ENCODE measurements at regions of chr6 and their contacts with region 1.

Region 1: GRCh38 chr6:87808005-87808757 is 106.1 kb upstream of the AKIRIN2 start:
- DNase-seq: no peak
- ATAC-seq: peak; percentile 45
- H3K4me3 ChIP-seq: no peak overlapping the region
- H3K27ac ChIP-seq: peak overlapping the region; percentile 43
- H3K4me1 ChIP-seq: peaks cover 27% of the 10 kb centered on the region
- H3K27me3 ChIP-seq: no peaks in the 10 kb centered on the region
- CTCF ChIP-seq: no peak
- EP300 ChIP-seq: no peak
- POLR2A ChIP-seq: no peak
- RAD21 ChIP-seq: no peak

Region 2: GRCh38 chr6:87723170-87724078 is 84.8 kb before region 1 on chr6:
- CTCF ChIA-PET with region 1: no interaction called
- POLR2A ChIA-PET with region 1: interaction called, 3 read pairs
- RAD21 ChIA-PET with region 1: interaction called, 5 read pairs
- SMC1A ChIA-PET with region 1: interaction called, 14 read pairs
- in situ Hi-C with region 1: no loop called
- intact Hi-C with region 1: no loop called
- DNase-seq: peak; percentile 77
- ATAC-seq: peak; percentile 77
- H3K4me3 ChIP-seq: peak overlapping the region; percentile 23; the same call in 1 of the 2 replicates
- H3K27ac ChIP-seq: peak overlapping the region; percentile 92
- H3K4me1 ChIP-seq: peaks cover 38% of the 10 kb centered on the region
- H3K27me3 ChIP-seq: no peaks in the 10 kb centered on the region
- CTCF ChIP-seq: no peak
- EP300 ChIP-seq: peak; percentile 26 to 49; a peak in 2 of 4 replicates
- POLR2A ChIP-seq: no peak
- RAD21 ChIP-seq: no peak

Region 3: DNA sequence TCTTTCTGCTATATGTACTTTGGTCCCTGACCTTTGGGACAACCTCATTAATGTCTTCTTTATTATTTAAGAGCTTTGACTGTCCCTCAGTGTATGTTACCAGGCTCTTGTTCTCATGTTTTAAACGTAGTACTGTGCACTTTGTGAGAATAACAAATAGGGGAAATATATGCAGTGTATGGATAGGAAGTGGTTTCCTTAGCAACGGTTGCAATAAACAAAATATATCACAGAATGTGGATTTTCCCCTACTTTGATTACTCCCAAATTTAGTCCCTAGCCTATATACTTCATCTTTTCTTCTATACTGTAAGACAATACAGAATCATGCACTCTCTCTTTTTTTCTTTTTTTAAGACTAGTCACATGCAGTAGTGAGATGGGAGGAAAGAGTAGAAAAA is 17.6 kb after region 1 on chr6:
- CTCF ChIA-PET with region 1: interaction called, 5 read pairs
- POLR2A ChIA-PET with region 1: interaction called, 3 read pairs
- RAD21 ChIA-PET with region 1: interaction called, 24 read pairs
- SMC1A ChIA-PET with region 1: interaction called, 16 read pairs
- in situ Hi-C with region 1: no loop called
- intact Hi-C with region 1: no loop called
- DNase-seq: no peak
- ATAC-seq: peak; percentile 87
- H3K4me3 ChIP-seq: no peak overlapping the region
- H3K27ac ChIP-seq: no peak overlapping the region
- H3K4me1 ChIP-seq: peaks cover 15% of the 10 kb centered on the region
- H3K27me3 ChIP-seq: no peaks in the 10 kb centered on the region
- CTCF ChIP-seq: no peak
- EP300 ChIP-seq: no peak
- POLR2A ChIP-seq: no peak
- RAD21 ChIP-seq: no peak

Region 4: DNA sequence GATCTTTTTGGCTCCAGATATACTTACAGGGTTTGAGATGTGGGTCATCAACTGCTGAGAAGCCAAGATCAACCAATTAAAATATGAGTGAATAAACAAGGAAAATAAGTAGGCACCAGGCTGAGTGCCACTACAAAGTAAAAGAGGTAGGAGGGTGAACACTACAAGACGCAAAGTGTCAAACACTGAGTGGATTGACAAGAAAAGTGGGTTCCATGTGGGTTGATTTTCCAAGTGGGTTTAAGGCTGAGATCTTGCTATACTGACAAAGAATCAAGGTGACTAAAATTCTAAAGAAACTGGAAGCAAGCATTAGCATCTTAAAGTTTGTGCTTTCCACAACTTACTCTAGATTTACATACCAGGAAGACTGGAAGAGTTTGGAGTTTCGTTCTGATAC is 79.1 kb after region 1 on chr6:
- CTCF ChIA-PET with region 1: no interaction called
- POLR2A ChIA-PET with region 1: interaction called, 10 read pairs
- RAD21 ChIA-PET with region 1: no interaction called
- SMC1A ChIA-PET with region 1: no interaction called
- in situ Hi-C with region 1: no loop called
- intact Hi-C with region 1: no loop called
- DNase-seq: no peak
- ATAC-seq: no peak
- H3K4me3 ChIP-seq: no peak overlapping the region
- H3K27ac ChIP-seq: no peak overlapping the region
- H3K4me1 ChIP-seq: no peaks in the 10 kb centered on the region
- H3K27me3 ChIP-seq: no peaks in the 10 kb centered on the region
- CTCF ChIP-seq: no peak
- EP300 ChIP-seq: no peak
- POLR2A ChIP-seq: no peak
- RAD21 ChIP-seq: no peak

Region 5: GRCh38 chr6:88184921-88185320 is 376.7 kb after region 1 on chr6:
- CTCF ChIA-PET with region 1: no interaction called
- POLR2A ChIA-PET with region 1: no interaction called
- RAD21 ChIA-PET with region 1: no interaction called
- SMC1A ChIA-PET with region 1: no interaction called
- in situ Hi-C with region 1: no loop called
- intact Hi-C with region 1: no loop called
- DNase-seq: no peak
- ATAC-seq: peak; percentile 64
- H3K4me3 ChIP-seq: no peak overlapping the region
- H3K27ac ChIP-seq: no peak overlapping the region
- H3K4me1 ChIP-seq: no peaks in the 10 kb centered on the region; the same call in 1 of the 2 replicates
- H3K27me3 ChIP-seq: no peaks in the 10 kb centered on the region
- CTCF ChIP-seq: no peak
- EP300 ChIP-seq: no peak
- POLR2A ChIP-seq: no peak
- RAD21 ChIP-seq: no peak